HCT116 (cell line): ENCODE measurements at regions of chr12 and their contacts with region 1.

Region 1: DNA sequence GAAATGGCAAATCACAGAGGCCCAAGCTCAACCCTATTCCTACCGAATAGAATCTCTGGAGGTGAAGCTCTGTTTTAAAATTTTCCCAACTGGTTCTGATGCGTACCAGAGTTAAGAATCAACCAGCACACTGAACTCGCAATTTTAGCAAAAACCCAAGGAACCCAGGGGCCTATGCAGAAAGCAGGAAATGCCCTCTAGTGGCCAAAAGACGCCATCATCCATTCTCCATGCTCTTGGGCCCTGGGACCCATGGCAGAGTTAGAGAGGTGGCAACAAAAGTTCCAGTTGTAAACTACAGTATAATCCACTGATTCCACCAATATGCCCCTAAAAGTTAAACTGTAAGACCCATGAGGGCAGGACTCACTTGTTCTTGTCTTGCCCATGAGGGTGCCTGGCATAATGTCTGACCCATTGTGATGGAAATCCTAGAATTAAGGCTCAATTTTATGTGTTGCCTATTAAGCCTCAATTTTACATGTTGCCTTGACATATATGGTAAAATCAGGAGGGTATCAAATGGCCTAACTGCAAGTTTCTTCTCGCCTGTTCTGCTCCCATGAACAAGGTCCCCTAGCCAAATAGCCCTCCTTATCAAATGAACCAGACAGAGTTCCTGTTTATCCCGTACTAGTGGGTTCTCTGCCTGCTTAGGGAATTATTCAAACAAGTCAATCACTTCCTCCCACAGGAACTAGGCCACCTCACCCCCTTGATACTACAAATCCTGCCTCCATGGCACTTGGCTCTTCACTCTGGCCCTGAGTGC is 137.5 kb upstream of the CPM start:
- DNase-seq: peak; percentile 59
- ATAC-seq: peak; percentile 85
- H3K4me3 ChIP-seq: no peak overlapping the region
- H3K27ac ChIP-seq: no peak overlapping the region
- H3K4me1 ChIP-seq: peaks cover 14 to 54% of the 10 kb centered on the region in 2 experiments
- H3K27me3 ChIP-seq: no peaks in the 10 kb centered on the region
- CTCF ChIP-seq: peak; percentile 91 to 96 (median 94)
- POLR2A ChIP-seq: no peak
- RAD21 ChIP-seq: peak; percentile 95

Region 2: GRCh38 chr12:68040450-68041075 is 1029.9 kb before region 1 on chr12:
- CTCF ChIA-PET with region 1: interaction called, 3 read pairs
- POLR2A ChIA-PET with region 1: no interaction called
- RAD21 ChIA-PET with region 1: no interaction called
- intact Hi-C with region 1: loop called (anchors 10 kb)
- DNase-seq: peak; percentile 65
- ATAC-seq: peak; percentile 92
- H3K4me3 ChIP-seq: no peak overlapping the region
- H3K27ac ChIP-seq: no peak overlapping the region
- H3K4me1 ChIP-seq: no peaks in the 10 kb centered on the region
- H3K27me3 ChIP-seq: no peaks in the 10 kb centered on the region
- CTCF ChIP-seq: peak; percentile 61 to 95 (median 85); a peak in 5 of 6 replicates
- POLR2A ChIP-seq: no peak
- RAD21 ChIP-seq: peak; percentile 86

Region 3: GRCh38 chr12:68865399-68866164 is 204.9 kb before region 1 on chr12:
- CTCF ChIA-PET with region 1: interaction called, 4 read pairs
- POLR2A ChIA-PET with region 1: no interaction called
- RAD21 ChIA-PET with region 1: no interaction called
- intact Hi-C with region 1: loop called (anchors 1 kb)
- DNase-seq: no peak
- ATAC-seq: no peak
- H3K4me3 ChIP-seq: no peak overlapping the region
- H3K27ac ChIP-seq: no peak overlapping the region
- H3K4me1 ChIP-seq: no peaks in the 10 kb centered on the region
- H3K27me3 ChIP-seq: no peaks in the 10 kb centered on the region
- CTCF ChIP-seq: no peak
- POLR2A ChIP-seq: no peak
- RAD21 ChIP-seq: no peak

Region 4: GRCh38 chr12:68871921-68872320 is 198.6 kb before region 1 on chr12:
- CTCF ChIA-PET with region 1: interaction called, 4 read pairs
- POLR2A ChIA-PET with region 1: no interaction called
- RAD21 ChIA-PET with region 1: no interaction called
- intact Hi-C with region 1: loop called (anchors 1 kb)
- DNase-seq: peak; percentile 19
- ATAC-seq: peak; percentile 71
- H3K4me3 ChIP-seq: no peak overlapping the region
- H3K27ac ChIP-seq: no peak overlapping the region
- H3K4me1 ChIP-seq: no peaks in the 10 kb centered on the region
- H3K27me3 ChIP-seq: no peaks in the 10 kb centered on the region
- CTCF ChIP-seq: peak; percentile 58 to 64 (median 58)
- POLR2A ChIP-seq: no peak
- RAD21 ChIP-seq: peak; percentile 70

Region 5: DNA sequence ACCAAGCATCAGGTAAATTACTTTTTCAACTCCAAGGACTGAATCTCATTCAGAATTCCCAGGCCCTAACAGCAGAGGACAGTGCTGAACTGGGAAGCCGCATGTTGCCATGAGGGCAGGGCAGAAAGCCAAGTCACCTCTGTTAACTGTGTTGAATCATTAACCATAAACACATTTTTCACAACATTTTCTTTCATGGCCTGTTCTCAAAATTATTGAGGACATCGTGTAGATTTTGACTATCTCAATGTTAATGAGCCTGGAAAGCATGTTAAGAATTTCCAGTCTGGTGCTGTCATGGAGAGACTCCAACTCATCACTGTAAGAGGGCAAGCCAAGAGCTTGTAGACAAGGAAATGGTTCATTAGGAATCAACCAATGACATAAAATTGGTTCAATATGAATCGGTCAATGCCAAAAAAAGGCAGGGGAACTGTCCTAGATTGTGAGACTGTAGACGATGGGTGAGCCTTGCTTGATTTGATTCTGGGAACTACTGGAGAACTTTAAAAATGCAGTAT is 171.2 kb before region 1 on chr12:
- CTCF ChIA-PET with region 1: no interaction called
- POLR2A ChIA-PET with region 1: no interaction called
- RAD21 ChIA-PET with region 1: no interaction called
- intact Hi-C with region 1: loop called (anchors 1 kb)
- DNase-seq: peak; percentile 8
- ATAC-seq: no peak
- H3K4me3 ChIP-seq: no peak overlapping the region
- H3K27ac ChIP-seq: no peak overlapping the region
- H3K4me1 ChIP-seq: peaks cover 0 to 5% of the 10 kb centered on the region in 2 experiments; a peak in 1 of 4 replicates
- H3K27me3 ChIP-seq: no peaks in the 10 kb centered on the region
- CTCF ChIP-seq: peak; percentile 21 to 50 (median 47); a peak in 4 of 6 replicates
- POLR2A ChIP-seq: no peak
- RAD21 ChIP-seq: peak; percentile 78

Region 6: DNA sequence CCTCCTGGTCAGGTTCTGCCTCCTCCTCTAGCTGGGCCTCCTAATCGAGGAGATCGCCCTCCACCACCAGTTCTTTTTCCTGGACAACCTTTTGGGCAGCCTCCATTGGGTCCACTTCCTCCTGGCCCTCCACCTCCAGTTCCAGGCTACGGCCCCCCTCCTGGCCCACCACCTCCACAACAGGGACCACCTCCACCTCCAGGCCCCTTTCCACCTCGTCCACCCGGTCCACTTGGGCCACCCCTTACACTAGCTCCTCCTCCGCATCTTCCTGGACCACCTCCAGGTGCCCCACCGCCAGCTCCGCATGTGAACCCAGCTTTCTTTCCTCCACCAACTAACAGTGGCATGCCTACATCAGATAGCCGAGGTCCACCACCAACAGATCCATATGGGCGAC is 188.2 kb after region 1 on chr12:
- CTCF ChIA-PET with region 1: no interaction called
- POLR2A ChIA-PET with region 1: no interaction called
- RAD21 ChIA-PET with region 1: no interaction called
- intact Hi-C with region 1: no loop called
- DNase-seq: no peak
- ATAC-seq: no peak
- H3K4me3 ChIP-seq: no peak overlapping the region
- H3K27ac ChIP-seq: no peak overlapping the region
- H3K4me1 ChIP-seq: no peaks in the 10 kb centered on the region
- H3K27me3 ChIP-seq: no peaks in the 10 kb centered on the region
- CTCF ChIP-seq: no peak
- POLR2A ChIP-seq: no peak
- RAD21 ChIP-seq: no peak